AG04449 (cell line): ENCODE measurements at regions of chr11 and their contacts with region 1.

Region 1: DNA sequence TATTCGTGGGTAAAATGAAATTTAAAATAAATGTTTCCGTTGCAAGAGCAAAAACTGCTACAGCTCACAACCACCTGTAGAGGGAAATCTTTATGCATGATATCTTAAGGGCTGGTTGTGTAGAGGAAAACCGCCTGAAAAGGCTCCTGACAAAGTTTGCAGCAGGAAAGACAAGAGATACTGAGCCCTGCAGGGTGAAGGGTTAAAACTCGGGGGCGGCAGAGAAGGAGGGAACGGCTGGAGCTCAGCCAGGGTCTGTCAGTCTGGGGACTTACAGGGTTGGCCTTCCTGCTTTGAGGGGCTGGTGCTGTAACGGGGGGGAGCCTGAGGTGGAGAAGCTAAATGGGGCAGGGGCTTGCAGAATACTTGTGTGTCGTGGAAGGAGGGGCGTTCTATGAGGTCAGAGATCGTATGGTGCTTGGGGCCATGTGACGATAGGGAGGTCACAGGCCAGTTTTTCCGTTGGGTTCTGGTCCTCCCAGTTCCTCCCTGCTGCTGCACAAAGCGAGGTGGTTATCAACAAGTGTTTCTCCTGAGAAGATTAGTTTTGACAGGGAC is 122.9 kb upstream of the HSD17B12 start:
- DNase-seq: no peak
- H3K4me3 ChIP-seq: no peak overlapping the region
- CTCF ChIP-seq: no peak

Region 2: GRCh38 chr11:43579171-43579918 is 21.7 kb after region 1 on chr11:
- CTCF ChIA-PET with region 1: interaction called, 16 read pairs
- POLR2A ChIA-PET with region 1: no interaction called
- DNase-seq: no peak
- H3K4me3 ChIP-seq: peak overlapping the region; percentile 61
- CTCF ChIP-seq: peak; percentile 75